A549 (cell line): ENCODE measurements at regions of chr17 and their contacts with region 1.

Region 1: GRCh38 chr17:57671667-57672632 is 73.1 kb downstream of the CCDC182 start:
- DNase-seq: peak; percentile 81 to 95
- ATAC-seq: peak; percentile 93 to 99
- H3K4me3 ChIP-seq: no peak overlapping the region
- H3K27ac ChIP-seq: peak overlapping the region; percentile 36 to 48; a peak in 4 of 6 replicates
- H3K4me1 ChIP-seq: peaks cover 14% of the 10 kb centered on the region
- CTCF ChIP-seq: peak; percentile 98
- EP300 ChIP-seq: no peak
- POLR2A ChIP-seq: no peak
- RAD21 ChIP-seq: peak; percentile 93 to 96

Region 2: GRCh38 chr17:57486873-57487301 is 185.1 kb before region 1 on chr17:
- CTCF ChIA-PET with region 1: no interaction called
- POLR2A ChIA-PET with region 1: no interaction called
- DNase-seq: no peak
- ATAC-seq: no peak
- H3K4me3 ChIP-seq: no peak overlapping the region
- H3K27ac ChIP-seq: no peak overlapping the region
- H3K4me1 ChIP-seq: peaks cover 7% of the 10 kb centered on the region; the same call in 2 of the 3 replicates
- CTCF ChIP-seq: no peak
- EP300 ChIP-seq: no peak
- POLR2A ChIP-seq: no peak
- RAD21 ChIP-seq: no peak

Region 3: GRCh38 chr17:57584050-57584551 is 87.8 kb before region 1 on chr17:
- CTCF ChIA-PET with region 1: interaction called, 10 read pairs
- POLR2A ChIA-PET with region 1: no interaction called
- DNase-seq: no peak
- ATAC-seq: no peak
- H3K4me3 ChIP-seq: no peak overlapping the region
- H3K27ac ChIP-seq: no peak overlapping the region
- H3K4me1 ChIP-seq: peaks cover 12% of the 10 kb centered on the region; the same call in 1 of the 3 replicates
- CTCF ChIP-seq: no peak
- EP300 ChIP-seq: no peak
- POLR2A ChIP-seq: no peak
- RAD21 ChIP-seq: no peak

Region 4: GRCh38 chr17:57622683-57623433 is 49.1 kb before region 1 on chr17:
- CTCF ChIA-PET with region 1: interaction called, 37 read pairs
- POLR2A ChIA-PET with region 1: no interaction called
- DNase-seq: peak; percentile 42 to 45
- ATAC-seq: peak; percentile 60 to 77
- H3K4me3 ChIP-seq: no peak overlapping the region
- H3K27ac ChIP-seq: peak overlapping the region; percentile 10 to 37; a peak in 4 of 6 replicates
- H3K4me1 ChIP-seq: peaks cover 17% of the 10 kb centered on the region
- CTCF ChIP-seq: no peak
- EP300 ChIP-seq: no peak
- POLR2A ChIP-seq: no peak
- RAD21 ChIP-seq: no peak

Region 5: GRCh38 chr17:57644326-57644725 is 27.6 kb before region 1 on chr17:
- CTCF ChIA-PET with region 1: interaction called, 36 read pairs
- POLR2A ChIA-PET with region 1: no interaction called
- DNase-seq: no peak
- ATAC-seq: no peak
- H3K4me3 ChIP-seq: no peak overlapping the region
- H3K27ac ChIP-seq: no peak overlapping the region
- H3K4me1 ChIP-seq: peaks cover 5% of the 10 kb centered on the region
- CTCF ChIP-seq: no peak
- EP300 ChIP-seq: no peak
- POLR2A ChIP-seq: no peak
- RAD21 ChIP-seq: no peak

Region 6: DNA sequence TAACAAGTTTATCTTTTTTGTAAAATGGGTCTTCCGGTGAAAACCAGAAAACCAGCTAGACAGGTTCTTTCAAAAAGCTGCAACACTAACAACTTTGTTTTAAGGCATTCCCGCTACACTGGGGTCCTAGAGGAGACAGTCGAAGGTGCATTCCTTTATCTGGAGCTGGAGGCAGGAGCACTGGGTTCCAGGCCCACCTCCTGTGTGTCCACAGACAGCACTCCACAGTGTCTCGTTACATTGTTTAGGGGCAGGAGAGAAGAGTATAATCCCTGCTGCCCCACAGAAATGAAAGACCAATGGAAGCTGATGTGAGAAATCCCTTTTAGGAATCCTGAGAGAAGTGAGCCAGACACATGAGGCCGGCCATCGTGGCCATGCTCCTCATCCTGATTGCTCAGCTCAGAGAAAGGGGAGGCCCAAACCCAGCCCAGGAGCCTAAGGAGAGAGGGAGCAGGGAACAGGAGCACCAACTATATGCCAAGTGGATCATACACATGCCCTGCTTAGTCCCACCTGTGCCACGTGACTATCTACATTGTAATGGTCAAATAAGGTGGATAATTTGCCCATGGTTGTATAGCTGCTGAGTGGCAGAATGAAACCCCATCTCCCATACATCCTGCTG is 13.7 kb after region 1 on chr17:
- CTCF ChIA-PET with region 1: interaction called, 44 read pairs
- POLR2A ChIA-PET with region 1: no interaction called
- DNase-seq: no peak
- ATAC-seq: 0 out of 6 replicates have a peak, but pooled peaks of 1 of the 2 experiments have one; percentile 27
- H3K4me3 ChIP-seq: no peak overlapping the region
- H3K27ac ChIP-seq: no peak overlapping the region
- H3K4me1 ChIP-seq: no peaks in the 10 kb centered on the region
- CTCF ChIP-seq: no peak
- EP300 ChIP-seq: no peak
- POLR2A ChIP-seq: no peak
- RAD21 ChIP-seq: no peak

Region 7: DNA sequence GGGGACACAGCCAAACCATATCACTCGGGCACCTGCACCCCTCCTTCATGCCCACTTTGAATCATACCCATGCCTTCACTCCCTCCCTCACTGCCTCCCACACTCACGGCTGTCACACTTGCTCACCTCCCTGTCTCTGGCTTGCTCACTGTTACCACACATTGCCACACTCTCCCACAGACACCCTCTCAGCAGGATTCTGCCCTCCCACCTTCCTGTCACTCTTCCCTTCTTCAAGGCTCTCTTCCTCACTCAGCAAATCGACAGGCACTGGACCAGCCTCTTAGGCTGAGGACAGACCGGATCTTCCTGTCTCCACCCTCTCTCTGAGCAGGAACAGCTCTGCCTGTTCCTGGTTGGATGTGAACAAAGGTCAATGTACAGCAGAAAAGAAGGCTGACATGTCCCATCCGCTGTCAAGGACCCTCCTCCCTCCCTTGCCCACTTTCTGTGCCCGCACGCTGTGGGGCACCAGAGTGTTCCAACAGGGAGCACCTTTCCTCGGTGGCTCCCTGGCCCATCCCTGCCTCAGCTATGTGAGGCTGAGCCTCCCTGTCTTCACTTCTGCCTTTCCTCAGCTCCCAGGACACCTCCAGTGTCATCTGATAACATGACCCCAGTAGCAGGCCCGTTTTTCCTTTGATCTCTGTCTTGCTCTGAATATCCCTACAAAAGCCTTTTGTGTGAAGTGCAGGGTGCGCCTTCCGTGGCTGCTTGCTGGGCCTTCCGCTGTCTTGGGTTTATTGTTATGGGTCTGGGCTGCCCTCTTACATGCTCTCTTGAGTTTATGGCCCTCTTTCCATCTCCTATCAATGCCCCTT is 26.2 kb after region 1 on chr17:
- CTCF ChIA-PET with region 1: interaction called, 26 read pairs
- POLR2A ChIA-PET with region 1: no interaction called
- DNase-seq: no peak
- ATAC-seq: no peak
- H3K4me3 ChIP-seq: no peak overlapping the region
- H3K27ac ChIP-seq: no peak overlapping the region
- H3K4me1 ChIP-seq: no peaks in the 10 kb centered on the region
- CTCF ChIP-seq: no peak
- EP300 ChIP-seq: no peak
- POLR2A ChIP-seq: no peak
- RAD21 ChIP-seq: no peak

Region 8: GRCh38 chr17:57747221-57748017 is 75.5 kb after region 1 on chr17:
- CTCF ChIA-PET with region 1: interaction called, 10 read pairs
- POLR2A ChIA-PET with region 1: no interaction called
- DNase-seq: peak; percentile 79 to 84
- ATAC-seq: peak; percentile 80 to 91
- H3K4me3 ChIP-seq: no peak overlapping the region
- H3K27ac ChIP-seq: no peak overlapping the region
- H3K4me1 ChIP-seq: no peaks in the 10 kb centered on the region
- CTCF ChIP-seq: peak; percentile 96
- EP300 ChIP-seq: no peak
- POLR2A ChIP-seq: no peak
- RAD21 ChIP-seq: peak; percentile 93 to 98

Region 9: GRCh38 chr17:57911834-57912673 is 240.1 kb after region 1 on chr17:
- CTCF ChIA-PET with region 1: no interaction called
- POLR2A ChIA-PET with region 1: no interaction called
- DNase-seq: peak in 1 of 2 experiments; percentile 59
- ATAC-seq: peak; percentile 15 to 35; a peak in 4 of 6 replicates
- H3K4me3 ChIP-seq: no peak overlapping the region
- H3K27ac ChIP-seq: peak overlapping the region; percentile 39 to 74; a peak in 5 of 6 replicates
- H3K4me1 ChIP-seq: peaks cover 64% of the 10 kb centered on the region
- CTCF ChIP-seq: no peak
- EP300 ChIP-seq: no peak
- POLR2A ChIP-seq: no peak
- RAD21 ChIP-seq: no peak